Mammary epithelial cell (primary cell): ENCODE measurements at regions of chr19 and their contacts with region 1.

Region 1: DNA sequence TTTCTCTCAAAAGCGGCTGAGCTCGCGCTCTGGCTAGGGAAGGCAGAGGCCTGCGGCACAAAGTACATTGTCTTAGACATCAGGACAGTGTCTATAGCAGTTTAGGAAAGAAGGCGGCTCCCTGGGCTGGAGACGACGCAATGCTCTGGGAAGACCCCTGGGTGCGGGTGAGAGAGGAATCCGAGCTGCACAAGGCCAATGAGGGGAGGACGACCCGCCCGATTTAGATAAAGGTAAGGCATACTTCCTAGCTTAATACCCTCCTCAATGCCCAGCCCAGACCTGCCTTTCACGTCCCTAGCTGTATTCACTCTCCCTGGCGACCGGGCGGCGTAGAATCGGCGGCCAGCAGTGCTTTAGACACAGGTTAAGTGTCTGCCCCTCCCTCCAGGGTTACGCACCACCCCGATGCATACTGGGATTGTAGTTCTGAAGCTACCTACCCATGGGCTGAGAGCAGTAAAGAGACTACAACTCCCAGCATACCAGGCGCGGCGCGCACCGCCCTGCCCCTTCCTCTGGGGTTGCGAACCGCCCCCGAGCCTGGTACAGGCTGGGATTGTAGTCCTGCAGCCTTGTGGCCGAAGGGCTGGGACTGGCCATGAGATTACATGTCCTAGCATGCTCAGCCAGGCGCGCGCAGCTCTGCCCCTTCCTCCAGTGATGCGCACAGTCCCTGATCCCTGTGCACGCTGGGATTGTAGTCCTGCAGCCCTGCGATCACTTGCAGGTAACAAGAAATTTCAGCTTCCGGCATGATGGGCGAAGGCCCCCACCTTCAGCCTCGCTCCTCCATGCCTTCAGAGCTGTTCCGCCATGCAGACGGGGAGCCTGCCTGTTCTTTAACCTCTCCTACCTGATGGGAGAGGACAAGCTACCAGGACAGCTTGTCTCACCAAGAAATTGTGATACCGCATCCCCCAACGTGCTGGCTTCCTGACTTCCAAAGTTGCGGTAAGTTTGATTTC is 43.4 kb upstream of the ZNF14 start:
- DNase-seq: peak; percentile 100
- H3K4me3 ChIP-seq: peak overlapping the region; percentile 50 to 80 (median 70)
- H3K27ac ChIP-seq: peak overlapping the region; percentile 63
- H3K4me1 ChIP-seq: peaks cover 8% of the 10 kb centered on the region
- H3K27me3 ChIP-seq: no peaks in the 10 kb centered on the region
- CTCF ChIP-seq: no peak

Region 2: DNA sequence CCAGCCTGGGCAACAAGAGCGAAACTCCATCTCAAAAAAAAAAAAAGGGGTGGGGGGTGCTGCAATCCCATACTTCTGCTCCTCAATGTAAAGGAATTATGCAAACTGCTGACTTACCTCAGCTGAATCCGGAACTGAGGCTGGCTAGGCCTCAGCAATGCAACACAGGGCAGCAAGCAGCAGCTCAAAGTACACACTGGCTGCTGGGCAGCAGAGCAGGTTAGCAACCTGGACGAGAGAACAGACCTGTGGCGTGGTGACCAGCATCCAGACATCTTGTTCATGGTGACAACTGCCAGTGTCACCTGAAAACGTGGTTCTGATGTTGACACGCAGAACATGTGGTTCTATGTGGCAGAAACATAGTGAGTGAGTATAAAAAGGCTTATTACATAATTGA is 71.5 kb before region 1 on chr19:
- CTCF ChIA-PET with region 1: no interaction called
- dilution Hi-C with region 1: no loop called
- in situ Hi-C with region 1: no loop called
- intact Hi-C with region 1: no loop called
- DNase-seq: no peak
- H3K4me3 ChIP-seq: no peak overlapping the region
- H3K27ac ChIP-seq: no peak overlapping the region
- H3K4me1 ChIP-seq: no peaks in the 10 kb centered on the region
- H3K27me3 ChIP-seq: no peaks in the 10 kb centered on the region
- CTCF ChIP-seq: no peak

Region 3: DNA sequence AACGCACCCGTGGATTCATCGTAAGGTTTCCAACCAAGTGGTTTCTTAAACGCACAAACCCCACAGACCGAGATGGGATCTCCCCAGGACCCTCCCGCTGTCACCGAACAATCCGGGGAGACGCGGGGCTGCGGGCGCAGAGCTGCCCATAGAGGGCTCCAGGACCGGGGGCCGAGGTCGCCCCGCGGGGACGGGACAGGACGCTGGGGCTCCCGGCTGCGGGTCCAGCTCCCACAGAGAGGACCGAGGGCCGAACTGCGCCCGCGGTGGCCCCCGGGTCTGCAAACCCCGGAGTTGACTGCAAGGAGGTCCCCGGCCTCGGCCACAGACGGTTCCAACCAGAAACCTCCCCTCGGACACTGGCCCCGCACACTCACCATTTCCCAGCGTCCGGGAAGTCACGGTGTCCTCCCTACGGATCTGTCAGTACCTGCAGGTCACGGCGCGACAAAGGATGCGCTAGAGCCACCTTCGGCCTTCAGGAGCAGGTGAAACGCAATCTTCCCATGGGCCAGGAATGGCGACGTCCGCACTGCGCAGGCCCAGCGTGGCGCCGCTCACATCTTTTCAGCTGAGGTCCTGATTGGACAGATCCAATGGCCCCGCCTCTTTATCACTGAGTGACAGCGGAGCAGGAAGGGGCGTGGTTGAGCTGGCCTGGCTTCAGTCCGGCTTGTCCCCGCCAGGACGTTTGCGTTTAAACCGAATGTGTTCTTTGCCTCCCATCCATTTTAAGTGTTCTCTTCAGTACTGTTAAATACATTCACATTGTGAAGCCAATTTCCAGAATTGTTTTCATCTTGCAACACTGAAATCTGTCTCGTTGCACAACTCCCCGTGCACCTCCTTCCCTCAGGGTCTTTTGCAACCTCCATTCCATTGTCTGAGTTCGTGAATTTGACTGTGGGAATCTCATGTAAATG is 43.5 kb before region 1 on chr19 and contains the start of gene ZNF14:
- CTCF ChIA-PET with region 1: no interaction called
- dilution Hi-C with region 1: no loop called
- in situ Hi-C with region 1: no loop called
- intact Hi-C with region 1: loop called (anchors 5 kb)
- DNase-seq: peak; percentile 90
- H3K4me3 ChIP-seq: peak within 1 kb of the TSS; percentile 66 to 74 (median 71)
- H3K27ac ChIP-seq: no peak within 1 kb of the TSS
- H3K4me1 ChIP-seq: no peaks in the 10 kb centered on the region
- H3K27me3 ChIP-seq: no peaks in the 10 kb centered on the region
- CTCF ChIP-seq: peak in 1 of 2 donors; percentile 33
- total RNA-seq, gene ZNF14: 3.1 to 7.2 TPM

Region 4: GRCh38 chr19:19821366-19821951 is 45.1 kb after region 1 on chr19 and contains the start of gene ZNF506:
- CTCF ChIA-PET with region 1: no interaction called
- dilution Hi-C with region 1: no loop called
- in situ Hi-C with region 1: no loop called
- intact Hi-C with region 1: loop called (anchors 1 kb)
- DNase-seq: peak; percentile 84
- H3K4me3 ChIP-seq: peak within 1 kb of the TSS; percentile 69 to 85 (median 83)
- H3K27ac ChIP-seq: peak within 1 kb of the TSS; percentile 38
- H3K4me1 ChIP-seq: no peaks in the 10 kb centered on the region
- H3K27me3 ChIP-seq: no peaks in the 10 kb centered on the region
- CTCF ChIP-seq: no peak
- total RNA-seq, gene ZNF506: 9.9 to 20.7 TPM

Region 5: GRCh38 chr19:19865739-19866481 is 89.6 kb after region 1 on chr19 and contains the start of gene ZNF253:
- CTCF ChIA-PET with region 1: no interaction called
- dilution Hi-C with region 1: no loop called
- in situ Hi-C with region 1: no loop called
- intact Hi-C with region 1: loop called (anchors 2 kb)
- DNase-seq: peak; percentile 92
- H3K4me3 ChIP-seq: peak within 1 kb of the TSS; percentile 57 to 79 (median 57)
- H3K27ac ChIP-seq: no peak within 1 kb of the TSS
- H3K4me1 ChIP-seq: peaks cover 3% of the 10 kb centered on the region
- H3K27me3 ChIP-seq: no peaks in the 10 kb centered on the region
- CTCF ChIP-seq: no peak
- total RNA-seq, gene ZNF253: 5.6 to 11.5 TPM

Region 6: DNA sequence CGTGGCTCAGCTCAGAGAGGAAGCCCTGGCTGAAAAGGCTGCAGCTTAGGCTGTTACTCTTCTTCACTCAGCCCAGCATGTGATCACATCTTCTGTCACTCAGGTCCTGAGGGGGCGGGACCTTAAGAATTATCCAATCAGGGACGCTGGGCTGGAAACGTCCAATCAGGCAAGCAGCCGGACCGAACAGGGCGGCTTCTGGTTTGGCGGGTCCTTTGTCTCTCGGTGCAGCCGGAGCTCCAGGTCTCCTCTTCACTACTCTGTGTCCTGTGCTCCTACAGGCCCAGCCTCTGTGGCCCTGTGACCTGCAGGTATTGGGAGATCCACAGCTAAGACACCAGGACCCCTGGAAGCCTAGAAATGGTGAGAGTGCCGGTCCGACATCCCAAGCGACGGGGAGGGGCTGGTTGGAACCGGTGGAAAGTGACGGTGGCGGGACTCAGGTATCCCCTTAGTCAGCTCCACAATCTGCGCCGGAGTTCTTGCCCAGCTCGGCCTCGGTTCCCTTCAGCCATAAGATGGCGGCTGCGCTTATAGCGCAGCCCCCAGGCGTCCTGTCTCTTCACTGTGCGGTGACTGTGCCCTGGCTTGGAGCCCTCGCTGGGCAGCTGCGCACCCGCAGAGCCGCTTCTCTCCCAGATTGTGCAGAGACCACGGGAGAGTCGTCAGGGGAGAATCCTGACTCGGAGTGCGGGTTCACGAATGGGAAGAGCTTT is 124.6 kb after region 1 on chr19 and contains the start of gene ZNF93:
- CTCF ChIA-PET with region 1: no interaction called
- dilution Hi-C with region 1: no loop called
- in situ Hi-C with region 1: no loop called
- intact Hi-C with region 1: loop called (anchors 5 kb)
- DNase-seq: peak; percentile 95
- H3K4me3 ChIP-seq: peak within 1 kb of the TSS; percentile 41 to 50 (median 43)
- H3K27ac ChIP-seq: no peak within 1 kb of the TSS
- H3K4me1 ChIP-seq: no peaks in the 10 kb centered on the region
- H3K27me3 ChIP-seq: no peaks in the 10 kb centered on the region
- CTCF ChIP-seq: no peak
- total RNA-seq, gene ZNF93: 6.4 to 16.8 TPM

Region 7: GRCh38 chr19:19956434-19957075 is 180.2 kb after region 1 on chr19:
- CTCF ChIA-PET with region 1: no interaction called
- dilution Hi-C with region 1: no loop called
- in situ Hi-C with region 1: no loop called
- intact Hi-C with region 1: loop called (anchors 5 kb)
- DNase-seq: no peak
- H3K4me3 ChIP-seq: no peak overlapping the region
- H3K27ac ChIP-seq: no peak overlapping the region
- H3K4me1 ChIP-seq: no peaks in the 10 kb centered on the region
- H3K27me3 ChIP-seq: no peaks in the 10 kb centered on the region
- CTCF ChIP-seq: no peak

Region 8: DNA sequence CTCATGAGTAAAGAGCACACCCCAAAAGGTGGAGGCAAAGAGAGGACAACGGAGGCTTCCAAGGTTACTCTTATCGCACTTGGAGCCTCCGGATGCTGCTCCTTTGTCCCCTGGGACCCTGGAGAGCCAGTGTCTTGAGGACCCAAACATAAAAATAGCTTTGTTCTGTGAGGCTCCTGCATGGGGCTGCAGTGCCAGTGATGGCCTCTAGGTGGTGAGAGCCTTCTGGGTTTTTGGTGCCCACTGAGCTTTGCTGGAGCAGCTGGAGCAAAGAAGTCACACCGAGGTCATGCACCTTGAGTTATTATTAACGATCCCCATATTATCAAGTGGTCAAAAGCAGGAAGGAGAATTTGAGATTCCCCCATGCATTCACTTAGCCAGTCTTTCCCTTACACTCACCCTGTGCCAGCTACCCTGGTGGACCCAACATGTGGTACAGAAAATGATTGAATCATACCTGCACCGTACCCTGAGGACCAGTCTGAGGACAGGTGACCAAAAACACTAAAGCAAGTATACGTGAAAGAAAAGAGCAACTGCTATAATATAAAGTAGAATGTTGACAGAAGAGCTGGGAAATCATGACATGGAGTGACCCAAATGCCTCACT is 221.4 kb after region 1 on chr19:
- CTCF ChIA-PET with region 1: interaction called, 13 read pairs
- dilution Hi-C with region 1: no loop called
- in situ Hi-C with region 1: no loop called
- intact Hi-C with region 1: no loop called
- DNase-seq: no peak
- H3K4me3 ChIP-seq: no peak overlapping the region
- H3K27ac ChIP-seq: no peak overlapping the region
- H3K4me1 ChIP-seq: no peaks in the 10 kb centered on the region
- H3K27me3 ChIP-seq: no peaks in the 10 kb centered on the region
- CTCF ChIP-seq: peak; percentile 8 to 31